ENCODE measurements at regions of chr7 and their contacts with region 1.

Region 1: GRCh38 chr7:36473454-36474282 is 84.0 kb downstream of the ANLN start:
- DNase-seq: peak; percentile 51
- ATAC-seq: peak; percentile 52
- H3K4me3 Mint-ChIP-seq: no peak overlapping the region
- H3K27ac Mint-ChIP-seq: no peak overlapping the region
- H3K4me1 Mint-ChIP-seq: peaks cover 19% of the 10 kb centered on the region
- H3K27me3 Mint-ChIP-seq: no peaks in the 10 kb centered on the region

Region 2: GRCh38 chr7:36232971-36233550 is 240.6 kb before region 1 on chr7:
- CTCF ChIA-PET with region 1: no interaction called
- DNase-seq: no peak
- ATAC-seq: no peak
- H3K4me3 Mint-ChIP-seq: no peak overlapping the region
- H3K27ac Mint-ChIP-seq: no peak overlapping the region
- H3K4me1 Mint-ChIP-seq: no peaks in the 10 kb centered on the region
- H3K27me3 Mint-ChIP-seq: no peaks in the 10 kb centered on the region

Region 3: GRCh38 chr7:36487756-36488336 is 14.2 kb after region 1 on chr7:
- CTCF ChIA-PET with region 1: interaction called, 17 read pairs
- DNase-seq: peak; percentile 57
- ATAC-seq: peak; percentile 70
- H3K4me3 Mint-ChIP-seq: no peak overlapping the region
- H3K27ac Mint-ChIP-seq: no peak overlapping the region
- H3K4me1 Mint-ChIP-seq: peaks cover 2% of the 10 kb centered on the region
- H3K27me3 Mint-ChIP-seq: peaks cover 3% of the 10 kb centered on the region

Region 4: DNA sequence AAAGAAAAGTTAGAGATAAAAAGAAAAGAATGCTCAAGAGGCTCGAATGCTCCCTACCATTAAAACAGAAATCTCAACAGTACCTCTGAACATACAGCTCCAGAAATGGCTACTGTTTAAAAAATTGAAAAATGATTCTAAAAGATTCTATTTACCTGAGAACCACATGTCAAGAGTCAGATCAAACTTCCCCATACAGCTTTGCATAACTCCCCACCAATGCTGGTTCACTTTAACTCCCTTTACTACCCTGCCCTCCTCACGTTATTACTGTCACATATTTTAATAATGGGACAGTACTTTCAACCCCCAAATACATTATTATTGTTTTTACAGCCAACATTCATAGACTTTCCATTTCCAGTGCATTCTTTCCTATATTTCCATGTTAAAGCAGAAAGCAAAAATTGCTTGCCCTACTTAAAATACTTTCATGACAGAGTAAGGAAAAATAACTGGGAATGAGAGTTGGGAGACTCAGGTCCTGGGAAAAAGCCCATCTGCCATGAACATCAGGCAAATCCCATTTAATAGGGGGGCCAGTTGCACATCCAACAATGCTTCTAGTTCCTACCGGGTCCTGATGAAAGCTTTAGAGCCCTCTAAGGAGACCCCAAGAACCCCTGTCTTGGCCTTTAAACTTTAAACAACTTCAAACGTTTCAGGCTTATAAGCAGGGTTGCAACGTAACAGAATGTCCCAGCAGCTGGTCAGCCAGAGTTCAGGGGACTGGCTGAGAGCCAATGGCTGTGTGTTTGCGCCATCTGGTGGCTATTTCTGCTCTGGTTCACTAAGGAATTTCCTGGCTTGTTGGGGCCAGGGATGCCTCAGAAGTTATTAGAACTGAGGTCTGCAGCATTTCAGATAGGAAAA is 727.6 kb after region 1 on chr7:
- CTCF ChIA-PET with region 1: interaction called, 16 read pairs
- DNase-seq: peak; percentile 62
- ATAC-seq: peak; percentile 56
- H3K4me3 Mint-ChIP-seq: no peak overlapping the region
- H3K27ac Mint-ChIP-seq: no peak overlapping the region
- H3K4me1 Mint-ChIP-seq: peaks cover 11% of the 10 kb centered on the region
- H3K27me3 Mint-ChIP-seq: no peaks in the 10 kb centered on the region